BJ (cell line): ENCODE measurements at regions of chr1 and their contacts with region 1.

Region 1: DNA sequence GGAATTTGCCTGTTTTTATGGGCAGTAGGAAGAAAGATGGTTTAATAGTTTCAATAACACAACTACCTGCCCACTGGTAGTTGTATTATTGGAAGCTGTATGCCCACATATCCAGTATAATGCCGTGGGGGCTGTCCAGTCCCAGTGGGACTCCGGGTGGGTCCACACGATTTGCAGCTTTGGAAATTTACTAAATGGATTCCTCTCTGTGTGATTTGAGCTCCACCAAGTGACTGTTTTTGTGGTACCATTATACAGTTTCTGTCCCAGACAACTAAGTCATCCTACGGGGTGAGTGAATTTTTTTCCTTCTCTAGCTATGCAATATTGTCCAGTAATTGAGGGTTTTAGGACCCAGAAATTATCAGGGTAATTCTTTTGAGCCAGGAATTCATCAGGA is 86.8 kb downstream of the PLA2G4A start:
- DNase-seq: no peak
- H3K4me3 ChIP-seq: no peak overlapping the region
- H3K27me3 ChIP-seq: no peaks in the 10 kb centered on the region
- CTCF ChIP-seq: no peak

Region 2: GRCh38 chr1:186930238-186930637 is 14.7 kb after region 1 on chr1:
- CTCF ChIA-PET with region 1: interaction called, 11 read pairs
- POLR2A ChIA-PET with region 1: no interaction called
- DNase-seq: peak; percentile 27
- H3K4me3 ChIP-seq: no peak overlapping the region
- H3K27me3 ChIP-seq: no peaks in the 10 kb centered on the region
- CTCF ChIP-seq: no peak

Region 3: DNA sequence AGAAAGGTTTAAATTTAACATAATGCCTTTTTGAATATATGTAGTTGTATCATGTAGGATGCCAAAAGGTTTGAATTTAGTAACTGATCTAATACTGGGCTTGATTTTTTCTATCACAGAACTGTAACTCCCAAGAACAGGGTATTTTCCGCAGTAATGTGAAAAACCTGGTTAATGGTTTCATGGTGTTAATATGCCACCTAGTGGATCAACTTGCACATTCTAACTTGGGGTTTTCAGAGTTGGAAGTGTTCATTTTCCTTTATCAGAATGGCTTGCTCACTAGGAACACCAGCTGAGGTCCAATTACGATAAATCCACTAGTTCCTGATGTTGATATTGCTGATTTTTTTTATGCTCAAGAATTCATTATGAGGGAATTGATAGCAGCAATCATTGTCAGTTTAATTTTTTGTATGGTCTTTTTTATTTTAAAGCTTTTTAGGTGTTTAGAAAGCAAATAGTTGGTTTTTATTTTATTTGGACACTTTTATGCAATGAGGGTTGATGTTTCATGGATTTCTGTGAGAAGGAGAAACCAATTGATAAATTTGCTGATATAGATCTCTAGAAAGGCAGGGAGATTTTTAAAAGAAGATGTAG is 70.4 kb after region 1 on chr1:
- CTCF ChIA-PET with region 1: interaction called, 21 read pairs
- POLR2A ChIA-PET with region 1: no interaction called
- DNase-seq: no peak
- H3K4me3 ChIP-seq: no peak overlapping the region
- H3K27me3 ChIP-seq: no peaks in the 10 kb centered on the region
- CTCF ChIP-seq: peak; percentile 60

Region 4: DNA sequence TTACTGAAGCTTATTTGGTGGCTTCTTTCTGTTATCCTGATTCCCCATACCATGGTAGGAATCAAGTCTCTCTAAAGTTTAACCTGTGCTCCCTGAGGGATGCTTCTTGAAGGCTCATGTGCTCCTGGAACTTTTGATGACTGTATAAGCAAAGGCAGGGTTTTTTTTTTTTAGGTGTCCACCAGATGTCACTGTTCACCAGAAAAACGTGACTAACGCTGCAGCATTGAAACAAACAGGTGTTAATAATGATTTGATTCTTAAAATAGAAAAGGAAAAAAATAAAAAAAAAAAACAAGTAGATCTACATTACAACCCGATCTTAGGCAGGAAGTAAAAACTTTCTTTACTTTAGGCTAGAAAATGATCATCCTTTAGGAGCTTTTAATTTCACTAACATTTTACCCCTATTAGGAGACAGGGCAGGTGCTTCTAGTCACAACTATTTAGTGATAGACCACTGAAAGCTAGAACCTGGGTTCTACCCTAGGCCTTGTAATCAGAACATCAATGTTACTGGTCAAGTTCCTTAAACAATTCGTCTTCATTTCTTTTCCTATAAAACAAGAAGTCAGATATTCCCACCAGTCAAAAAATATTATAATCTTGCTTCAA is 136.2 kb after region 1 on chr1:
- CTCF ChIA-PET with region 1: no interaction called
- POLR2A ChIA-PET with region 1: no interaction called
- DNase-seq: no peak
- H3K4me3 ChIP-seq: no peak overlapping the region
- H3K27me3 ChIP-seq: no peaks in the 10 kb centered on the region
- CTCF ChIP-seq: peak; percentile 48